Dorsolateral prefrontal cortex (tissue), 120 donors: ENCODE measurements at regions of chr12 and their contacts with region 1.

Region 1: GRCh38 chr12:4857472-4858291 is 52.0 kb upstream of the KCNA1 start:
- DNase-seq: peak; percentile 70 to 90 (median 86)
- H3K4me3 ChIP-seq: peak overlapping the region in 58 of 59 donors; percentile 8 to 64 (median 40)
- H3K27ac ChIP-seq: peak overlapping the region in 46 of 59 donors; percentile 5 to 82 (median 55)
- H3K27me3 ChIP-seq: no peaks in the 10 kb centered on the region
- CTCF ChIP-seq: peak; percentile 71 to 96 (median 92)

Region 2: GRCh38 chr12:5003020-5003666 is 145.5 kb after region 1 on chr12:
- intact Hi-C with region 1: loop called (anchors 1 to 2 kb)
- DNase-seq: peak; percentile 58 to 88 (median 82)
- H3K4me3 ChIP-seq: no peak overlapping the region
- H3K27ac ChIP-seq: no peak overlapping the region
- H3K27me3 ChIP-seq: peaks cover 0 to 5% (median 0%) of the 10 kb centered on the region in 45 donors
- CTCF ChIP-seq: peak; percentile 80 to 98 (median 93)

Region 3: DNA sequence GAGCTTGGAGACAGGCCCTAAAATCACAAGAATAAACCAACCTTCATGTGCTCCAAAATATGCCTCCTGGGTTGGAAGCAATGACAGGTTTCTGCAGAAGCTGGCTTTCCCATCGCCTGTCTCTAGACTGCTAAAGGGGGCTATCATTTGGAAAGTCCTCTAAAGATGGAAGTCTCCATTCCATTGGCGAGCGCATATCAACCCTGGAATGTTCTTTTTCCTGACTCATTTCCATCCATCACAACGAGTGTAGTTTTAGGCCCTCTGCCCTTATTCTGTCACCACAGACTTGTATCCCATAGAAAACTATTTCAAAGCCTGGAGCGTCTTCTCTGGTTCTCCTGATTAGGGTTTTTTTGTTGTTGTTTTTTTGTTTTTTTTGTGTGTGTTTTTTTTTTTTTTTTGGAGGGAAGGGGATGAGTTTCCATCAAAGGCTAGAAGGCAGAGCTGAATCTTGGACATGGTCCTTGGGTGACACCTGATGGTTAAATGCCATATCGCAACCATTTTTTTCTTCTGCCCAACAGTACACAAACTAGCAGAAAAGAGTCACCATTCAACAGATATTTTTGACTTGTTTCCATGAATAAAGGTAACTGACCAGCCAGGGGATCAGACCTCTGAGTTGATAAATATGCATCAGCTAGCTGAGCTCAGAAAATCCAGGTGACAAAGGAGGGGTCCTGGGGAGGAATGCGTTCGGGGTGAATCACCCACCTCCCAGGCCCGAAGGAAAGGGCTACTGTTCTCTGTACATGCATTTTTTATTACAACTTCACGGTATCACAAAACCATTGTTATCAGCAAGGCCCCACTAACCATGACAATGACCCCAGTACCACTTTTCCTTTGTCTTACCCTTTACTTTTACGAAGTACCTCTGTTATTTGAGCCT is 226.5 kb after region 1 on chr12:
- intact Hi-C with region 1: loop called (anchors 2 kb)
- DNase-seq: peak in 3 of 10 donors; percentile 38 to 53 (median 51)
- H3K4me3 ChIP-seq: no peak overlapping the region
- H3K27ac ChIP-seq: no peak overlapping the region
- H3K27me3 ChIP-seq: peaks cover 0 to 3% (median 0%) of the 10 kb centered on the region in 45 donors
- CTCF ChIP-seq: peak; percentile 51 to 92 (median 79)

Region 4: GRCh38 chr12:5442251-5443006 is 584.7 kb after region 1 on chr12:
- intact Hi-C with region 1: loop called in 1 of 2 experiments (anchors 10 kb)
- DNase-seq: peak in 2 of 10 donors; percentile 19 to 47
- H3K4me3 ChIP-seq: no peak overlapping the region
- H3K27ac ChIP-seq: no peak overlapping the region
- H3K27me3 ChIP-seq: peaks cover 0 to 79% (median 15%) of the 10 kb centered on the region in 45 donors
- CTCF ChIP-seq: peak in 55 of 56 donors; percentile 14 to 73 (median 51)